ENCODE measurements at regions of chr17 and their contacts with region 1.

Region 1: GRCh38 chr17:68759343-68760132 is 158.4 kb upstream of the FAM20A start:
- DNase-seq: peak; percentile 82
- H3K4me3 ChIP-seq: peak overlapping the region in 2 of 4 donors; percentile 22 to 34
- H3K27ac ChIP-seq: peak overlapping the region; percentile 66 to 79 (median 72)
- H3K4me1 ChIP-seq: peaks cover 0 to 16% (median 5%) of the 10 kb centered on the region in 4 donors
- H3K27me3 ChIP-seq: no peaks in the 10 kb centered on the region
- CTCF ChIP-seq: peak; percentile 70 to 89 (median 79)
- EP300 ChIP-seq: no peak
- POLR2A ChIP-seq: no peak

Region 2: GRCh38 chr17:68172461-68172954 is 587.0 kb before region 1 on chr17:
- in situ Hi-C with region 1: loop called in 1 of 4 experiments (anchors 25 kb)
- intact Hi-C with region 1: no loop called
- DNase-seq: peak; percentile 81
- H3K4me3 ChIP-seq: no peak overlapping the region
- H3K27ac ChIP-seq: no peak overlapping the region
- H3K4me1 ChIP-seq: peaks cover 0 to 3% (median 0%) of the 10 kb centered on the region in 4 donors
- H3K27me3 ChIP-seq: no peaks in the 10 kb centered on the region
- CTCF ChIP-seq: peak; percentile 94 to 99 (median 98)
- EP300 ChIP-seq: no peak
- POLR2A ChIP-seq: no peak

Region 3: GRCh38 chr17:68255731-68256538 is 503.6 kb before region 1 on chr17:
- in situ Hi-C with region 1: loop called in 1 of 4 experiments (anchors 25 kb)
- intact Hi-C with region 1: no loop called
- DNase-seq: no peak
- H3K4me3 ChIP-seq: no peak overlapping the region
- H3K27ac ChIP-seq: peak overlapping the region in 1 of 4 donors; percentile 18
- H3K4me1 ChIP-seq: peaks cover 0 to 15% (median 3%) of the 10 kb centered on the region in 4 donors
- H3K27me3 ChIP-seq: no peaks in the 10 kb centered on the region
- CTCF ChIP-seq: no peak
- EP300 ChIP-seq: no peak
- POLR2A ChIP-seq: no peak

Region 4: DNA sequence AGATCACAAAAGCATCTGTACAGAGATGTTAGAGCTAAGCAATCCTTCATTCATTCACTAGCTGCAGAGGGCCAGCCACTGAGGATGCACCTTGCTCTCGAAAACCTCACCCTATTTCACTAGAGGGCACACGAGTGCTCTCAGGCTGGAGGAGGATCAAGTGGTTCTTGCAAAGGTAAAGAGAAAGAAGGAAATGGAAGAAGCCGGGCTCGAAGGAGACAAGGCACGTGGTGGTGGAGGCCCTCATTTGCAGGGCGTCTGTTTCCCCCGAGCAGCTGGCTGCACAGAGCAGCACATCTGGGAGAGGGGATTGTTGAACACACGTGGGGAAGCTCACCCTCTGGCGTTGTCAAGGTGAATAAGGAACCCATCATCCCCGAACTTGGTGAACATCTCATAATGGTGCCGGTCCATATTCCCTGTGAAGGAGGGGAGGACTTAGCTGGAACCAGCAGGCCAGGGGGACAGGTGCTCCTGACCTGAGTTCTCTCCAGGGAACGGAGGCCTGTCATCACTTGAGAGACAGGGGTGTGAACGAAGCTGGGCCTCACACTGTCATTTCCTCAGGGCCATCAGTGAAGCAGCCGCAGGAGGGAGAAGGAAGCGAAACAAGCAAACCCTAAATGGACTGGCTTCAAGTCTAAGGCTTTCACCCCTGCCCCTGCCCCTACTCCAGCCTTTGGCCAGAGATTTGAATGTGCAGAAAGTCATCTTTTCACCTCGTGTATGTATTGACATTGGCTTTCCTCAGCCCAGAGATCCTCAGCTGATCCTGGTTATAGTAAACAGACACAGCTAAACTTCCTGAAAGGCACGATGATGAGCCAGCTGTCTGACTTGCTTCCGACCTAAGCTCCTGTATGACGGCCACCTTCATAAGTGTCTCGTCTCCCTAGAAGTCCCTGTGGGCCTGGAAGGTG is 219.7 kb before region 1 on chr17:
- in situ Hi-C with region 1: loop called in 2 of 4 experiments (anchors 10 kb)
- intact Hi-C with region 1: no loop called
- DNase-seq: no peak
- H3K4me3 ChIP-seq: no peak overlapping the region
- H3K27ac ChIP-seq: no peak overlapping the region
- H3K4me1 ChIP-seq: no peaks in the 10 kb centered on the region
- H3K27me3 ChIP-seq: no peaks in the 10 kb centered on the region
- CTCF ChIP-seq: no peak
- EP300 ChIP-seq: no peak
- POLR2A ChIP-seq: no peak

Region 5: GRCh38 chr17:68684949-68685357 is 74.6 kb before region 1 on chr17:
- in situ Hi-C with region 1: no loop called
- intact Hi-C with region 1: loop called (anchors 2 kb)
- DNase-seq: no peak
- H3K4me3 ChIP-seq: no peak overlapping the region
- H3K27ac ChIP-seq: peak overlapping the region in 3 of 4 donors; percentile 13 to 37 (median 21)
- H3K4me1 ChIP-seq: no peaks in the 10 kb centered on the region
- H3K27me3 ChIP-seq: no peaks in the 10 kb centered on the region
- CTCF ChIP-seq: no peak
- EP300 ChIP-seq: no peak
- POLR2A ChIP-seq: no peak

Region 6: DNA sequence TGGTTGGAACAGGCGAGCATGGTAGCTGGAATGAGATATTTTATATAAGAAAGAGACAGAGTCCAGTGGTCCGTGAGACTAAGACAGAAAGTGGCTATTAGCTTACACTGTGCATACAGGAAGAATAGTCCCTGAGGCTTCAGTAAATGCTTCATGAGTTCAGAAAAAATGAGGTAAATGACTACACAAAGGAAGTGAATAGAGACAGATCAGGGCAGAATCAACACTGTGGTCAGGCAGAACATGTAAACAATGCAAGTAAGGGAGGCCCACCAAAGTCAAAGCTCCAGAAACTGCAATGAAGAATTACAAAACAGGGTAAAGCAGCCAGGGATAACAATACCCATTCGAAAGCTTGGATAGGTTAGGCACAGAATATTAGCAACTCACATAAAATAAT is 464.3 kb after region 1 on chr17:
- in situ Hi-C with region 1: loop called in 1 of 4 experiments (anchors 10 kb)
- intact Hi-C with region 1: no loop called
- DNase-seq: no peak
- H3K4me3 ChIP-seq: no peak overlapping the region
- H3K27ac ChIP-seq: no peak overlapping the region
- H3K4me1 ChIP-seq: no peaks in the 10 kb centered on the region
- H3K27me3 ChIP-seq: no peaks in the 10 kb centered on the region
- CTCF ChIP-seq: no peak
- EP300 ChIP-seq: no peak
- POLR2A ChIP-seq: no peak

Region 7: GRCh38 chr17:69597898-69598692 is 838.6 kb after region 1 on chr17:
- in situ Hi-C with region 1: no loop called
- intact Hi-C with region 1: no loop called
- DNase-seq: no peak
- H3K4me3 ChIP-seq: no peak overlapping the region
- H3K27ac ChIP-seq: no peak overlapping the region
- H3K4me1 ChIP-seq: no peaks in the 10 kb centered on the region
- H3K27me3 ChIP-seq: no peaks in the 10 kb centered on the region
- CTCF ChIP-seq: no peak
- EP300 ChIP-seq: no peak
- POLR2A ChIP-seq: no peak

Measured in transverse colon (tissue), 4 donors.